Activated CD4-positive, alpha-beta memory T cell treated with anti-CD3 and anti-CD28 coated beads, Interleukin-2, amount 10 ng/mL, durations not matched to agents 7 days and 5 days (primary cell): ENCODE measurements at regions of chr5 and their contacts with region 1.

Region 1: DNA sequence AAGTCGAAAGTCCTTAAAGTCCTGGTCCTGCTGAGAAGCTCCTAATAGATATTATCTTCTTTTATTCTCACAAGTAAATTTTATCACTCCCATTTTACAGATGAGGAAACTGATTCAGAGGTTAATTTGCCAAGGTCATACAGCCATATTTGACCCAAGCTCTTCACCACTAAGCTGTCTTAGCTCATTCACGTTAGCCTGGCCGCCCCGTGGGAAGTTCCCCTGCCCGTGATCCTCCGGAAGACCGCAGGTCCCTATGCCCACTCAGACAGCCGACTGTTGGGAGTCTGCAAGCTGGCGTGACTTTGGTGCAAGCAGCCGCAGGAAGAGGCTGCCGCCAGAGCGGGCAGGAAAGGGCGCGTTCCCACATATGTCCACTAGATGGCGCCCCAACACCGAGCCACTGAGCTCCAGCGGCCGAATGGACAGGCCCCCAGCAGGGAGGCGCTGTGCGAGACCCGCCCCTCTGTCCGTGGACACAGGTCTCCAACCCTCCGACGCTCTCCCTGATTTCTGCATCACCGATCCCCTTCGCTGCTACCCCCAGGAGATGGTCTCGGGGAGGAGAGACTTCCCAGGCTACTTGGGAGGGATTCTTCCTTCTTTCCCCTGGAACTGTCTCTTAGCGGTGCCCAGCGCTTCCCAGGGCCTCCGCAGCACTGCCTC is 10.0 kb upstream of the ARAP3 start:
- DNase-seq: peak; percentile 91
- H3K4me3 Mint-ChIP-seq: peak overlapping the region; percentile 60
- H3K27ac Mint-ChIP-seq: peak overlapping the region; percentile 85
- H3K4me1 Mint-ChIP-seq: peaks cover 34% of the 10 kb centered on the region
- H3K27me3 Mint-ChIP-seq: peaks cover 31% of the 10 kb centered on the region

Region 2: DNA sequence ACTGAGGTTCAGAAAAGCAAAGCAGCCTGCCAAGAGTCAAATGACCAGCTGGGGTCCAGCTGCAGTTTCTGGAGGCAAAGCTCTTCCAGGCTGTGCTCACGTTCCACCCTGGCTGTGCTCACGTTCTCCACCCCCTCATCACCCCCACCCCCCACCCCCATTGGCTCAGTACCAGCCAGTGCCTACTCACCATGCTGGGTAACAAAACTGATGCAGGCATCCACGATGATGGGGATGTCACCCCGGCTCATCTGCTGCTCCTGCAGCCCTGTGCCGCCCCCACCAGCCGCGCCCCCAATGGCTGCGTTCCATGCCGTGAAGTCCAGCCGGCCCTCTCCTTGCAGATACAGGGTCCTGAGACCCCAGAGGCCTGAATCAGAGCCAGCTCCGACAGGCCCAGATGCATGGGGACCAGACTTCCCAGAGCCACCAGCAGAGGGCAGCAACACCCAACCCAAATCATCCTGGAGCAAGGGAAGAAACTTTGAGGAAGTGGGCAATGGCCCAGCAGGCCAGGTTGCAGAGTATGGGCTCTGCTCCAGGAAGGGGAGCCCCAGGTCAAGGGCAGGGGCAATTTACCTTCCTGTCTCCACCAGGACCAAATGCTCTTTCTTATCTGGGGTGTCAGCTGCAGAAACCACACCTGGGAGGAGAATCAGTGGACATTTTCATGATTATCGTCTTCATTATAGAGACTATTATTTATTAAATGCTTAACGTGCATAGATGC is 27.1 kb before region 1 on chr5:
- CTCF ChIA-PET with region 1: interaction called, 67 read pairs
- POLR2A ChIA-PET with region 1: no interaction called
- DNase-seq: peak; percentile 80
- H3K4me3 Mint-ChIP-seq: no peak overlapping the region
- H3K27ac Mint-ChIP-seq: no peak overlapping the region
- H3K4me1 Mint-ChIP-seq: peaks cover 5% of the 10 kb centered on the region
- H3K27me3 Mint-ChIP-seq: no peaks in the 10 kb centered on the region

Region 3: DNA sequence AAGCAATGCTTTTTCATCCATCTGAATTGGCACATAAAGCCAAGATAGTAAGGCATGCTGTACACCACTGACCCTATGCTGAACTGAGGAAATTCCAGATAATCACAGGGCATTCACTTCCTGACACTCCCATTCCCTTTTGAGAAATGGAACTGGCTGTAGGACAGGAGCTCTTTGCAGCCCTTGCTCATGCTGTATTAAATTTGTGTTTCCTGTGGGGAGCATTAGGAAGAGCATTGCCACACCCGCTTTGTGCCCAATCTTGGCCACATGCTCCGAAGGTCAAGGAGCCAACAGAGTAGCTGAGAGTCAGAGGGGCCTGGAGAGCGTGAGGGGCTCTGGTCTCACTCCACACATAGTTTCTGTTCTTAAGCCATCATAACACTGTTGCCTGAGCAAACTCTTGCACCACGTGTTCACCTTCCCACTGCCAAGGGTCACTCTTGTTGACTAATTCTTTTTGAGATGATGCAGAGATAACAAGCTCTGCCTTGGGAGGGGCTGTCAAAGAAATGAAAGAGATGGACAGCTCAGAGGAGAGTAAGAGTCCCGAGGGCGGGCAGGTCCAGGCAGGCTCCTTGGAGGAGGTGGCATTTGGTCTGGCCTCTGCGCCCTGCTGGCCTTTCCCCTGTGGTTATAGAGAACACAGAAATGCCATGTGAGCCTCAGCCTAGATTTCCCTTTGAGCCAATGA is 21.8 kb after region 1 on chr5:
- CTCF ChIA-PET with region 1: no interaction called
- POLR2A ChIA-PET with region 1: no interaction called
- DNase-seq: no peak
- H3K4me3 Mint-ChIP-seq: no peak overlapping the region
- H3K27ac Mint-ChIP-seq: no peak overlapping the region
- H3K4me1 Mint-ChIP-seq: peaks cover 3% of the 10 kb centered on the region
- H3K27me3 Mint-ChIP-seq: peaks cover 14% of the 10 kb centered on the region

Region 4: DNA sequence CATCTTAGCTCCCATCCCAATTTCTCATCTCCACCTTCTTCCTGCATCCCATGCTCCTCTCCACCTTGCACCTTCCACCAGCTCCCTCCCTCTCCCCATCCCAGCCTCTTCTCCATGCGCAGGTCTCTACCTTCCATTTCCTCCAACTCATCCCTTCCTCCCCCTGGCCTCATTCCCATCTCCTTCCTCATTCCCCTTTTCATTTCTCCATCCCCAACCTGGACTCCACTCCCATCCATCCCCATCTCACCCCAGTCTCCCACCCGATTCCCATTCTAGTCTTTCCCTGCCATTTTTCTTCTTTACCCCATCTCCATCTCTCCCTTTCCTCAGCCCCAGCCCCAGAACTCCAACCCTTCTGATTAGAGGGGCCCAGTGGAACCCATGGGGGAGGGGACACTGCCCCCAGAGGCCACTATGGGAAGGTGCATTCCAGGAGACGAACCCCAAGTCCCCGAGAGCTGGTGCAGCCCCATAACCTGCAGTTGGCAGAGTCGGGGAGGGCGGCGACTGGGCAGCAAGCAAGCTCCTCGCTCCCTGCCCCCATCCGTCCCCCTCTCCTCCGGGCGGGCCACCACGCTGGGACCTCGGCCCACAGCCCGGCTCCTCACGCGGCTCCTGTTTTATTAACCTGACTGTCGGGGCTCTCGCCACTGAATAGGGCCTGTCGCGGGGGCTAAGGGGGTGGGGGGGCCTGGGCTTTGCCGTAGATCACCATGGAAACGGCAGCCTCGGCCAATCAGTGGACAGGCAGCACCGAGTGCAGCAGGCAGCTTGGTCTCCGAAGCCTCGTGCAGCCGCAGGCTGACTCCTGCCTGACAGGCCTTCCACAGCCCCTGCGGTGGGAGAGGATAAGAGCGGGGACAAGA is 119.5 kb after region 1 on chr5:
- CTCF ChIA-PET with region 1: interaction called, 60 read pairs
- POLR2A ChIA-PET with region 1: interaction called, 3 read pairs
- DNase-seq: peak; percentile 39
- H3K4me3 Mint-ChIP-seq: no peak overlapping the region
- H3K27ac Mint-ChIP-seq: no peak overlapping the region
- H3K4me1 Mint-ChIP-seq: peaks cover 6% of the 10 kb centered on the region
- H3K27me3 Mint-ChIP-seq: peaks cover 57% of the 10 kb centered on the region

Region 5: GRCh38 chr5:141878711-141879425 is 186.9 kb after region 1 on chr5:
- CTCF ChIA-PET with region 1: interaction called, 157 read pairs
- POLR2A ChIA-PET with region 1: interaction called, 33 read pairs
- DNase-seq: peak; percentile 89
- H3K4me3 Mint-ChIP-seq: peak overlapping the region; percentile 70
- H3K27ac Mint-ChIP-seq: no peak overlapping the region
- H3K4me1 Mint-ChIP-seq: peaks cover 29% of the 10 kb centered on the region
- H3K27me3 Mint-ChIP-seq: peaks cover 84% of the 10 kb centered on the region

Region 6: GRCh38 chr5:141940695-141941271 is 248.8 kb after region 1 on chr5:
- CTCF ChIA-PET with region 1: interaction called, 16 read pairs
- POLR2A ChIA-PET with region 1: no interaction called
- DNase-seq: no peak
- H3K4me3 Mint-ChIP-seq: no peak overlapping the region
- H3K27ac Mint-ChIP-seq: peak overlapping the region; percentile 52
- H3K4me1 Mint-ChIP-seq: peaks cover 23% of the 10 kb centered on the region
- H3K27me3 Mint-ChIP-seq: no peaks in the 10 kb centered on the region

Region 7: GRCh38 chr5:141976176-141976575 is 284.2 kb after region 1 on chr5:
- CTCF ChIA-PET with region 1: interaction called, 11 read pairs
- POLR2A ChIA-PET with region 1: no interaction called
- DNase-seq: no peak
- H3K4me3 Mint-ChIP-seq: no peak overlapping the region
- H3K27ac Mint-ChIP-seq: no peak overlapping the region
- H3K4me1 Mint-ChIP-seq: peaks cover 21% of the 10 kb centered on the region
- H3K27me3 Mint-ChIP-seq: no peaks in the 10 kb centered on the region